ENCODE measurements at regions of chr11 and their contacts with region 1.

Region 1: GRCh38 chr11:43071338-43071737 is 240.5 kb upstream of the API5 start:
- DNase-seq: peak; percentile 61 to 73
- H3K4me3 ChIP-seq: no peak overlapping the region
- H3K4me3 Mint-ChIP-seq: no peak overlapping the region
- H3K27ac Mint-ChIP-seq: no peak overlapping the region
- H3K4me1 ChIP-seq: peaks cover 11% of the 10 kb centered on the region; the same call in 1 of the 2 replicates
- H3K4me1 Mint-ChIP-seq: peaks cover 5% of the 10 kb centered on the region
- H3K27me3 ChIP-seq: no peaks in the 10 kb centered on the region
- H3K27me3 Mint-ChIP-seq: no peaks in the 10 kb centered on the region
- CTCF ChIP-seq: no peak

Region 2: DNA sequence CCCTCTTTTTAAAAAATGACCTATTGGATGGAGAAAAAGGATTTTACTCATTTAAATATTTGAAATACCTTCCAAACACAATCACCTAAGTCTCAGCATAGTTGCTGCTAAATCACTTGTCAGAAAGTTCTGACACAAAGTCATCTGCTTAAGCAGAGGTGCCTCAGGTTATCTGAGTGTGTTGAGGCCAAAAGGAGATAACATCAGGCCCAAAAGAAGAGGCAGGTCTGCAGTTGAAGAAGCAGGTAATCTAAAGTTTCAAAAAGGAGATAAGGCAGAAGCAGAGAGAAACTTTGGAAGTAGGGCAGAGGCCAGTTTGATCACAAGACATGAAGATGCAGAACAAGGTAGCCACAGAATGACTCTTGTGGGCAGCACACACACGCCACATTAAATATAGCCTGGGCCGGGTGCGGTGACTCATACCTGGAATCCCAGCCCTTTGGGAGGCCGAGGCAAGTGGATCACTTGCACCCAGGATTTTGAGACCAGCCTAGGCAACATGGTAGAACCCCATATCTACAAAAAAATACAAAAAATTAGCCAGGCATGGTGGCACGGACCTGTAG is 64.7 kb after region 1 on chr11:
- CTCF ChIA-PET with region 1: no interaction called
- POLR2A ChIA-PET with region 1: no interaction called
- intact Hi-C with region 1: loop called (anchors 1 kb)
- DNase-seq: peak; percentile 39 to 68
- H3K4me3 ChIP-seq: no peak overlapping the region
- H3K4me3 Mint-ChIP-seq: peak overlapping the region; percentile 29
- H3K27ac Mint-ChIP-seq: peak overlapping the region; percentile 50
- H3K4me1 ChIP-seq: peaks cover 22% of the 10 kb centered on the region
- H3K4me1 Mint-ChIP-seq: peaks cover 12% of the 10 kb centered on the region
- H3K27me3 ChIP-seq: no peaks in the 10 kb centered on the region
- H3K27me3 Mint-ChIP-seq: no peaks in the 10 kb centered on the region
- CTCF ChIP-seq: no peak